ENCODE measurements at regions of chr2 and their contacts with region 1.

Region 1: GRCh38 chr2:162091325-162092007 is 17.5 kb upstream of the DPP4 start:
- DNase-seq: peak; percentile 90
- H3K4me3 ChIP-seq: no peak overlapping the region
- H3K27ac ChIP-seq: peak overlapping the region; percentile 93
- H3K4me1 ChIP-seq: peaks cover 66% of the 10 kb centered on the region
- H3K27me3 ChIP-seq: no peaks in the 10 kb centered on the region
- CTCF ChIP-seq: peak; percentile 36 to 51

Region 2: DNA sequence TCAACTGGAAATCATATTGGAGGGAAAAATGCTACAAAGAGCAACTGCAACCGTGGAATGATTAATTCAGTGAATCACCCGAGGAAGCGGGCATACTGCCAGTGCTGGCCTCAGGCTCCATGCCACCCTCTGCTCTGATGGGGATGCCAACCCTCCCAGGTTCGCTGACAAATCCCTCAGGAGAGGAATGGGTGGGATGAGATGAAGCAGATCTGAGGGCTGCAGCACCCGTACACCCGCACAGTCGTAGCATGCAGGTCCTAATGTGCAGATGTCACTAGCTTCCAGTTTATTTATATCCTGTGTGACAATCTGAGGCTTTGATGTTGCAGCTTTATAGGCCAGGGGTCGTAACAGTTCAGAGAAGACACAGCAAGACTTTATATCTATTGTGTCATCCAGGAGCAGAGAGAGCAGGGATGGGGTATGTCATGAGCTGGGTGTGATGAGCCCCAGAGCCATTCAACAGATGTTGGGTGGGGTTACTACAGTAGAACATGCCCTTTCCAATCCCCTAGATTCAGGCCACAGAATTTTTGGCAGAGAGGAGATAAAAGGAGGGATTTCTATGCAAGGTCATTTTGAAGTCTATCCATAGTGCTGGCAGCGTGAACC is 62.1 kb before region 1 on chr2:
- CTCF ChIA-PET with region 1: no interaction called
- dilution Hi-C with region 1: no loop called
- in situ Hi-C with region 1: no loop called
- intact Hi-C with region 1: loop called (anchors 5 kb)
- DNase-seq: peak; percentile 78
- H3K4me3 ChIP-seq: no peak overlapping the region
- H3K27ac ChIP-seq: no peak overlapping the region
- H3K4me1 ChIP-seq: peaks cover 32% of the 10 kb centered on the region
- H3K27me3 ChIP-seq: no peaks in the 10 kb centered on the region
- CTCF ChIP-seq: no peak

Region 3: GRCh38 chr2:162138310-162138709 is 46.8 kb after region 1 on chr2:
- CTCF ChIA-PET with region 1: no interaction called
- dilution Hi-C with region 1: no loop called
- in situ Hi-C with region 1: no loop called
- intact Hi-C with region 1: no loop called
- DNase-seq: no peak
- H3K4me3 ChIP-seq: no peak overlapping the region
- H3K27ac ChIP-seq: no peak overlapping the region
- H3K4me1 ChIP-seq: no peaks in the 10 kb centered on the region
- H3K27me3 ChIP-seq: no peaks in the 10 kb centered on the region
- CTCF ChIP-seq: no peak